ENCODE measurements at regions of chr11 and their contacts with region 1.

Region 1: GRCh38 chr11:11148104-11148509 is 204.9 kb downstream of the CSNK2A3 start:
- DNase-seq: peak in 7 of 9 donors; percentile 29 to 43 (median 35)
- ATAC-seq: no peak
- H3K4me3 ChIP-seq: no peak overlapping the region
- H3K4me3 Mint-ChIP-seq: peak overlapping the region in 9 of 10 donors; percentile 20 to 84 (median 70)
- H3K27ac ChIP-seq: peak overlapping the region; percentile 87
- H3K27ac Mint-ChIP-seq: peak overlapping the region in 8 of 9 donors; percentile 93 to 99 (median 98)
- H3K4me1 ChIP-seq: peaks cover 31 to 61% of the 10 kb centered on the region in 2 donors
- H3K4me1 Mint-ChIP-seq: peaks cover 32 to 74% (median 70%) of the 10 kb centered on the region in 7 donors
- H3K27me3 ChIP-seq: no peaks in the 10 kb centered on the region
- H3K27me3 Mint-ChIP-seq: peaks cover 0 to 2% (median 0%) of the 10 kb centered on the region in 5 donors

Region 2: GRCh38 chr11:11119917-11120316 is 28.2 kb before region 1 on chr11:
- CTCF ChIA-PET with region 1: no interaction called
- POLR2A ChIA-PET with region 1: no interaction called
- intact Hi-C with region 1: no loop called
- DNase-seq: no peak
- ATAC-seq: no peak
- H3K4me3 ChIP-seq: no peak overlapping the region
- H3K4me3 Mint-ChIP-seq: no peak overlapping the region
- H3K27ac ChIP-seq: no peak overlapping the region
- H3K27ac Mint-ChIP-seq: no peak overlapping the region
- H3K4me1 ChIP-seq: no peaks in the 10 kb centered on the region
- H3K4me1 Mint-ChIP-seq: peaks cover 0 to 10% (median 4%) of the 10 kb centered on the region in 7 donors
- H3K27me3 ChIP-seq: no peaks in the 10 kb centered on the region
- H3K27me3 Mint-ChIP-seq: peaks cover 0 to 23% (median 0%) of the 10 kb centered on the region in 5 donors

Region 3: DNA sequence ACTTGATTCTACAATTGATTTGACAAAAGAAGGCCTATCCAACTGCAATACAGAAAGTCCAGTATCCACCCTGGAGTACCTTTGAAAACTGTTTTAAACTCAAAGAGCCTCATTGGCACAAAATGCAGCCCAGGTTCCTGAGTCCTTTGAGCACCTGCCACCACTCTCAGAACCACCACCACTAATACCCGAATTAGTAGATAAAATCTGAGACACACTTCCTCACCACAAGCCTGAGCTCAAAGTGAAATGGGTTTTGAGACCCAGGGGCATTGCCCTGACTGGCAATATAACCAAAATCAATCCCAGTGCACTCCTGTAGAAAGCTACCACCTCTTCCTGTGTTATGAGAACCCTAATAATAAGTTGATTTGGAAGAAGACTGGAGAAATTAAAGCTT is 10.8 kb before region 1 on chr11:
- CTCF ChIA-PET with region 1: interaction called, 5 read pairs
- POLR2A ChIA-PET with region 1: interaction called, 8 read pairs
- intact Hi-C with region 1: loop called in 1 of 2 experiments (anchors 1 kb)
- DNase-seq: peak in 2 of 9 donors; percentile 10 to 18
- ATAC-seq: peak; percentile 50
- H3K4me3 ChIP-seq: no peak overlapping the region
- H3K4me3 Mint-ChIP-seq: peak overlapping the region in 7 of 10 donors; percentile 13 to 67 (median 30)
- H3K27ac ChIP-seq: no peak overlapping the region
- H3K27ac Mint-ChIP-seq: peak overlapping the region in 8 of 9 donors; percentile 47 to 76 (median 66)
- H3K4me1 ChIP-seq: peaks cover 0 to 10% of the 10 kb centered on the region in 2 donors
- H3K4me1 Mint-ChIP-seq: peaks cover 7 to 45% (median 30%) of the 10 kb centered on the region in 7 donors
- H3K27me3 ChIP-seq: no peaks in the 10 kb centered on the region
- H3K27me3 Mint-ChIP-seq: peaks cover 0 to 16% (median 0%) of the 10 kb centered on the region in 5 donors

Region 4: DNA sequence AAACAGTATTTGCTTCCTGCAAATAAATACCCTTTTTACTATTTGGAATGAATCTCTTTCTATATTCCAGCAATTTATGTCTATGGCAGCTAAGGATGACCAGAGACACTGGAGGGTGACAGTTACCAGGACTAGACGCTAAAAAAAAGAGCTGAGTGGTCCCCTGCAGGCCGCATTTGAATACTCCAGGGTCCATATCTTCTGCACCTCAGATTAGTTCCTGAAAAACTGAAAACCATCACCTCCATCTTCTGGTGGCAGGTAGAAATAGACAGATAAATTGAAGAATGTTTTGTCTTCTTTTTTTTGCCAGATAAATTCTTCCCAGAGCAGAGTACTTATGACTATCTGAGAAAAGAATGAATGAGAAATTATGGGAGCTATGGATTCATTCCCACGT is 59.3 kb after region 1 on chr11:
- CTCF ChIA-PET with region 1: no interaction called
- POLR2A ChIA-PET with region 1: no interaction called
- intact Hi-C with region 1: no loop called
- DNase-seq: peak in 1 of 9 donors; percentile 2
- ATAC-seq: no peak
- H3K4me3 ChIP-seq: no peak overlapping the region
- H3K4me3 Mint-ChIP-seq: no peak overlapping the region
- H3K27ac ChIP-seq: no peak overlapping the region
- H3K27ac Mint-ChIP-seq: no peak overlapping the region
- H3K4me1 ChIP-seq: no peaks in the 10 kb centered on the region
- H3K4me1 Mint-ChIP-seq: no peaks in the 10 kb centered on the region
- H3K27me3 ChIP-seq: no peaks in the 10 kb centered on the region
- H3K27me3 Mint-ChIP-seq: peaks cover 10 to 34% (median 21%) of the 10 kb centered on the region in 5 donors

Measured in naive thymus-derived CD4-positive, alpha-beta T cell (primary cell).